ENCODE measurements at regions of chr16 and their contacts with region 1.

Region 1: GRCh38 chr16:71746442-71747046 is 22.0 kb upstream of the PHLPP2 start:
- DNase-seq: peak; percentile 7 to 42
- H3K4me3 ChIP-seq: no peak overlapping the region
- H3K27ac ChIP-seq: no peak overlapping the region
- H3K4me1 ChIP-seq: no peaks in the 10 kb centered on the region
- H3K27me3 ChIP-seq: no peaks in the 10 kb centered on the region
- CTCF ChIP-seq: peak; percentile 81

Region 2: GRCh38 chr16:71564155-71564967 is 182.2 kb before region 1 on chr16:
- CTCF ChIA-PET with region 1: interaction called, 5 read pairs
- POLR2A ChIA-PET with region 1: no interaction called
- intact Hi-C with region 1: loop called (anchors 1 kb)
- DNase-seq: no peak
- H3K4me3 ChIP-seq: peak overlapping the region; percentile 73
- H3K27ac ChIP-seq: peak overlapping the region; percentile 69
- H3K4me1 ChIP-seq: peaks cover 17% of the 10 kb centered on the region
- H3K27me3 ChIP-seq: no peaks in the 10 kb centered on the region
- CTCF ChIP-seq: no peak

Region 3: GRCh38 chr16:71961066-71962039 is 214.8 kb after region 1 on chr16:
- CTCF ChIA-PET with region 1: no interaction called
- POLR2A ChIA-PET with region 1: no interaction called
- intact Hi-C with region 1: loop called (anchors 5 kb)
- DNase-seq: peak; percentile 48 to 75
- H3K4me3 ChIP-seq: no peak overlapping the region
- H3K27ac ChIP-seq: no peak overlapping the region
- H3K4me1 ChIP-seq: no peaks in the 10 kb centered on the region
- H3K27me3 ChIP-seq: no peaks in the 10 kb centered on the region
- CTCF ChIP-seq: peak; percentile 89